Pancreas (tissue), 10 donors: ENCODE measurements at regions of chr12 and their contacts with region 1.

Region 1: DNA sequence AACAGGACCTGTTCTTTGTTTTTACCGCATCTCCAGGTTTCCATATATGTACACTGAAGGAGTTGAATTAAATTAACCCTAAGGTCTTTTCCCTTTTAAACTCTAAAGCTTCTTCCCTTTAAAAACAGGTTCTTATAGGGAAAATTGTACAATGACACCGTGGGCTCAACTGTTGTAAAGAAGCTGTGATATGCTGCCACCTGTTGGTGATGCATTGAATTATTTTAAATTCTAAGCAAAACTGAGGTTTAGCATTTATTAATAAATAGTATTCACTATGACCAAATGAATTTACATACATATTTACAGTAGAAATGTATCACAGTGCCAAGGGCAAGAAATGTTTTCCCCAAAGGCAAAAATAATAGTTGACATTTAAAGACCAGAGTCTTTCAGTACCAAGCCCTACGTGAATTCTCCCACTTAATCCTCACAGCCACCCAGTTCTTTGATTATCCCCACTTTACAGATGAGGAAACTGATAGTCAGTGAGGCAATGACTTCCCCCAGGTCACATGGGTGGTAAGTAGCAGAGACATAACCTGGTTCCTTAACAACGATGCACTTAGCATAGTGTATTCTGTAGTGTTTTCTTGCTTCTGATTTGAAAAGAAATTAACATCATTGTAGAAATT is 35.7 kb upstream of the TMEM263 start:
- DNase-seq: no peak
- ATAC-seq: peak; percentile 56 to 74 (median 68)
- H3K4me3 ChIP-seq: no peak overlapping the region
- H3K27ac ChIP-seq: no peak overlapping the region
- H3K4me1 ChIP-seq: no peaks in the 10 kb centered on the region
- H3K27me3 ChIP-seq: no peaks in the 10 kb centered on the region
- CTCF ChIP-seq: peak; percentile 29 to 74 (median 68)

Region 2: GRCh38 chr12:106386813-106387535 is 533.1 kb before region 1 on chr12:
- intact Hi-C with region 1: loop called in 2 of 3 experiments (anchors 10 kb)
- DNase-seq: no peak
- ATAC-seq: no peak
- H3K4me3 ChIP-seq: no peak overlapping the region
- H3K27ac ChIP-seq: no peak overlapping the region
- H3K4me1 ChIP-seq: no peaks in the 10 kb centered on the region
- H3K27me3 ChIP-seq: no peaks in the 10 kb centered on the region
- CTCF ChIP-seq: no peak

Region 3: GRCh38 chr12:106986625-106987430 is 66.8 kb after region 1 on chr12 and contains the start of gene MTERF2:
- intact Hi-C with region 1: no loop called
- DNase-seq: peak; percentile 91 to 97 (median 94)
- ATAC-seq: peak; percentile 95 to 98 (median 95)
- H3K4me3 ChIP-seq: peak within 1 kb of the TSS; percentile 63 to 71 (median 66)
- H3K27ac ChIP-seq: peak within 1 kb of the TSS; percentile 68 to 92 (median 88)
- H3K4me1 ChIP-seq: peaks cover 7 to 8% (median 8%) of the 10 kb centered on the region in 3 donors
- H3K27me3 ChIP-seq: no peaks in the 10 kb centered on the region
- CTCF ChIP-seq: no peak
- total RNA-seq, gene MTERF2: 9.9 to 15.0 (median 13.7) TPM

Region 4: GRCh38 chr12:107109741-107110719 is 190.0 kb after region 1 on chr12:
- intact Hi-C with region 1: no loop called
- DNase-seq: no peak
- ATAC-seq: peak in 1 of 4 donors; percentile 25
- H3K4me3 ChIP-seq: no peak overlapping the region
- H3K27ac ChIP-seq: no peak overlapping the region
- H3K4me1 ChIP-seq: no peaks in the 10 kb centered on the region
- H3K27me3 ChIP-seq: no peaks in the 10 kb centered on the region
- CTCF ChIP-seq: no peak

Region 5: DNA sequence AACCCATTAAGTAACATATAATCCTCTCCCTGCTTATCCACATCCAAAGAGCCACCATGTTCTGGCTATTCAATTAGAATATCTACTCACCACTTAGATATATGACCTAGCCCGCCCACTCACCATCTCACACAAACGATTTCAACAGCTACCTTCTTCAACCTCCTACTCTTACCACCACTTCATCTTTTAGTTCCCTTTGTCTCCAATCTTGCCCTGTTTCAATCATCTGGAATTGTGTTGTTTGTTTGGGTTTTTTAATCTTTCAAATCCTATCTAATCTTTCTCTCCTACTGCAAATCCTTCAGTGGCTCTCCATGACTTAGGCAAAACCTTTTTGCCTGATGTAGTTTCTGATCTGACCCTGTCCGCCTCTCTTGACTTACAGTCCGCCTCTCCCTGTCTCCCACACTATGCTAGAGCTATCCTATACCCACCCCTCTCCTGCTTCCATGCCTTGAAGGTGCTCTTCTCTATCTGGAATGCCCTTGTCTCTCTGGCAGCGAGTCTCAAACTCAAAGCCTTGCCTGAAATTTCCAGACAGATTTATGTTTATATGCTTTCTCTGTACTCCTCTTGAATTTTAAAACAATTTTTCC is 334.3 kb after region 1 on chr12:
- intact Hi-C with region 1: no loop called
- DNase-seq: no peak
- ATAC-seq: no peak
- H3K4me3 ChIP-seq: no peak overlapping the region
- H3K27ac ChIP-seq: no peak overlapping the region
- H3K4me1 ChIP-seq: no peaks in the 10 kb centered on the region
- H3K27me3 ChIP-seq: no peaks in the 10 kb centered on the region
- CTCF ChIP-seq: no peak